ENCODE measurements at regions of chr1 and their contacts with region 1.

Region 1: GRCh38 chr1:239951511-239952140 is 140.1 kb upstream of the FMN2 start:
- DNase-seq: peak; percentile 44 to 77 (median 70)
- ATAC-seq: peak; percentile 85
- H3K4me3 ChIP-seq: no peak overlapping the region
- H3K27ac ChIP-seq: no peak overlapping the region
- H3K4me1 ChIP-seq: no peaks in the 10 kb centered on the region
- H3K27me3 ChIP-seq: no peaks in the 10 kb centered on the region
- CTCF ChIP-seq: peak; percentile 52 to 77 (median 56); a peak in 5 of 6 replicates
- EP300 ChIP-seq: no peak
- POLR2A ChIP-seq: no peak
- RAD21 ChIP-seq: peak; percentile 63 to 68

Region 2: DNA sequence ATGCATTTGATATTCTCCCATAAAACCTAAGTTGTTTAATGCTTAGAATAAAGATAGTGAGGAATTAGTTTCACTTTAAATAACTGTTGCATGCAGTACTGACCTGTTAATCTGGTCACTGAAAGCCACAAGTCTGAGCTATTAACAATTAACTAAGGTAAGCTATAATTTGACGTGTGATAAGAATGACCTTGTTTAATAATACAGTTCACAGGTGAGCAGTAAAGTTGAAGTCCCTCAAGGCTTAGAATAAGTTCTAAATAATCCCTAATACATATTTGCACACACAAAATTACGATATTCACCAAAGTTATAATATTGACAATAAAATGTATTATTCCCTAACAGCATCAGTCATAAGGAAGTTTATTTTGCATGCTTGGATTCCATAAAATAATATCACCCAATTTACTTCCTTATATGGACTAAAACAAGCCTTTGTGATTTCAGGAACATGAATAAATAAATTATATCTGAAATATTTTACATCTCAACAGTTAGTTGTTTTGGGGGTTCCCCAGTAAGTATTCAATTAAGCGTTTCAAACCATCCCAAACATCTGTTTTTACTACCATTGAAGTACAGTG is 635.9 kb before region 1 on chr1:
- CTCF ChIA-PET with region 1: no interaction called
- POLR2A ChIA-PET with region 1: no interaction called
- in situ Hi-C with region 1: no loop called
- intact Hi-C with region 1: no loop called
- DNase-seq: no peak
- ATAC-seq: no peak
- H3K4me3 ChIP-seq: no peak overlapping the region
- H3K27ac ChIP-seq: no peak overlapping the region
- H3K4me1 ChIP-seq: no peaks in the 10 kb centered on the region
- H3K27me3 ChIP-seq: no peaks in the 10 kb centered on the region
- CTCF ChIP-seq: no peak
- EP300 ChIP-seq: no peak
- POLR2A ChIP-seq: no peak
- RAD21 ChIP-seq: no peak

Region 3: GRCh38 chr1:239987103-239987745 is 35.6 kb after region 1 on chr1:
- CTCF ChIA-PET with region 1: no interaction called
- POLR2A ChIA-PET with region 1: interaction called, 3 read pairs
- in situ Hi-C with region 1: no loop called
- intact Hi-C with region 1: loop called (anchors 2 kb)
- DNase-seq: peak; percentile 11 to 55 (median 38)
- ATAC-seq: 0 out of 3 replicates have a peak, but pooled peaks have one; percentile 51
- H3K4me3 ChIP-seq: no peak overlapping the region
- H3K27ac ChIP-seq: no peak overlapping the region
- H3K4me1 ChIP-seq: no peaks in the 10 kb centered on the region
- H3K27me3 ChIP-seq: no peaks in the 10 kb centered on the region
- CTCF ChIP-seq: peak; percentile 39 to 67 (median 46); a peak in 4 of 6 replicates
- EP300 ChIP-seq: no peak
- POLR2A ChIP-seq: no peak
- RAD21 ChIP-seq: peak; percentile 38 to 54

Region 4: DNA sequence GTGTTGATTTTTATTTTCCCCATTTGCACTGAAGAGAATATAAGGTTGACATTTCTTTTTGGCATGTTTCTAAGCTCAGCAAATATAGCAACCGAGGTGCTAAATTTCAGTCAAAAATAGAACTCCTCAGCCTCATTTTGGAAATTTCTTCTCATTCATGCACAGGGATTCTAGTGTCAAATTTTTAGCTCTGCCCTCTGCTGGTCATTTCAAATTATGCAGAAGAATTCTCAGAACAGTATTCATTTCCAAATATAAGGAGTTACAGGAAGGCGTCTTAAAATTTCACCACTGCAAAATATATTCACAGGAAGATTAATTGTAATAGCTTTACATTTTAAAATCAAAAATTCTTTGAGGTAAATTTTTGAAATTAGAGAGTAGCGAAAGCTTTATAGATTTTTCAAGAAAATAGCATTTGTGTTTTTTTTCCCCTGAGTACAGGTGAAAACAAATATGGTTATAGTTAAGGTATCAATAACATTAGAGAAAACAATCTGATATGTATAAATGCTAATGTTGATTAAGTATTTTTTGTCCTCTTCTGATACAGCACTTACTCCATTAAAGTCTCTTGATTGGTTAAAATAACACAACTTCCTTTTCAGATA is 198.0 kb after region 1 on chr1:
- CTCF ChIA-PET with region 1: no interaction called
- POLR2A ChIA-PET with region 1: no interaction called
- in situ Hi-C with region 1: no loop called
- intact Hi-C with region 1: loop called (anchors 10 kb)
- DNase-seq: peak; percentile 9 to 37 (median 32)
- ATAC-seq: peak; percentile 73
- H3K4me3 ChIP-seq: no peak overlapping the region
- H3K27ac ChIP-seq: no peak overlapping the region
- H3K4me1 ChIP-seq: no peaks in the 10 kb centered on the region
- H3K27me3 ChIP-seq: no peaks in the 10 kb centered on the region
- CTCF ChIP-seq: peak; percentile 22 to 60 (median 47); a peak in 5 of 6 replicates
- EP300 ChIP-seq: no peak
- POLR2A ChIP-seq: no peak
- RAD21 ChIP-seq: peak in 1 of 2 experiments; percentile 41; a peak in 1 of 4 replicates

Measured in K562 (cell line).